HEK293 (cell line): ENCODE measurements at regions of chr1 and their contacts with region 1.

Region 1: DNA sequence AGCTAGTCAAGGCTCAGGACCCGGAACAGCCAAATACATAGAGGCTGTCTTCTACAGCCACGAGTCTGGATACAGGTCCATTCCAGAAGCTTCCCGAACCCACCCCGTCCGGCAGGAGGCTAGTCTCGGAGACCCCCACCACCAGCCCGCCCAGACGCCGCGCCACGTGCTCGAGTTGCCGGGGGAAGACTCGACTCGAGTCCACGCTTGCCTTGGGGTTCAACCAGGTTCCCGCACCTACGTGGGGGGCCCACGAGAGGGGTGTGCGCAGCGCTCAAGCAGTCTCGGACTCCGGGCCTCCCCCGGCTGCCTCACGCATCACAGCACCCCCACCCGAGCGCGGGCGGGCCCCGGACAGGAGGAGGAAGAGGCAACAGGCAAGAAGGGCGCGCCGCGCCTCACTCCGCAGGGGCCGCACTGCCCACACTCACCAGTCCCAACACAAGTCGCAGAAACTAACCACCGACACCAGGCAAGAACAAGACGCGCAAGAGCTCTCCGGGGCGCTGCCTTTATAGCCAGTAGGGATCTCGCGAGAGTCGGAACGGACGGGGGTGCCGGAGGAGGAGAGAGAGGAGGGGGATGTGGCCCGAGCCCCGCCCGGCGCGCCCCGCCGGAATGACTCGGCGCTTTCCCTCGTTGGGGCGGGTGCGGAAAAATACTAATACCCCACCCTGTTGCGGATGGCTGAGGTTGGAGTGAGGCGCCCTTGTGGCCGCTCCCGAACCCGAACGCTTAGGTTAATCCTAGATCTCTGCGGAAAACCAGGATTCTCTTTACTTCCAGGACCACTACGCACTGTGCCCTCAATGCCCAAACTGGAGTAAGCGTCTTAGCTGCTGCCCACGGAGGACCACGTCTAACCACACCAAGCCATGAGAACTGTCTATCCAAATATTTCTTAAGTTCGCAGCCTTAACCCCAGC is at the start of gene PRDX1:
- H3K4me3 ChIP-seq: peak within 1 kb of the TSS; percentile 96
- H3K27ac ChIP-seq: peak within 1 kb of the TSS; percentile 63
- H3K4me1 ChIP-seq: 0 out of 2 replicates have a peak, but pooled peaks cover 3% of the 10 kb centered on the region
- CTCF ChIP-seq: peak; percentile 75

Region 2: GRCh38 chr1:45490626-45491486 is 30.8 kb before region 1 on chr1 and contains the start of gene TESK2:
- CTCF ChIA-PET with region 1: interaction called, 6 read pairs
- POLR2A ChIA-PET with region 1: interaction called, 30 read pairs
- H3K4me3 ChIP-seq: peak within 1 kb of the TSS; percentile 92
- H3K27ac ChIP-seq: peak within 1 kb of the TSS; percentile 66; the same call in 1 of the 2 replicates
- H3K4me1 ChIP-seq: no peaks in the 10 kb centered on the region
- CTCF ChIP-seq: peak; percentile 25; the same call in 1 of the 2 replicates

Region 3: GRCh38 chr1:45535988-45536766 is 14.5 kb after region 1 on chr1:
- CTCF ChIA-PET with region 1: interaction called, 4 read pairs
- POLR2A ChIA-PET with region 1: interaction called, 59 read pairs
- H3K4me3 ChIP-seq: no peak overlapping the region
- H3K27ac ChIP-seq: no peak overlapping the region
- H3K4me1 ChIP-seq: peaks cover 3% of the 10 kb centered on the region; the same call in 1 of the 2 replicates
- CTCF ChIP-seq: no peak

Region 4: DNA sequence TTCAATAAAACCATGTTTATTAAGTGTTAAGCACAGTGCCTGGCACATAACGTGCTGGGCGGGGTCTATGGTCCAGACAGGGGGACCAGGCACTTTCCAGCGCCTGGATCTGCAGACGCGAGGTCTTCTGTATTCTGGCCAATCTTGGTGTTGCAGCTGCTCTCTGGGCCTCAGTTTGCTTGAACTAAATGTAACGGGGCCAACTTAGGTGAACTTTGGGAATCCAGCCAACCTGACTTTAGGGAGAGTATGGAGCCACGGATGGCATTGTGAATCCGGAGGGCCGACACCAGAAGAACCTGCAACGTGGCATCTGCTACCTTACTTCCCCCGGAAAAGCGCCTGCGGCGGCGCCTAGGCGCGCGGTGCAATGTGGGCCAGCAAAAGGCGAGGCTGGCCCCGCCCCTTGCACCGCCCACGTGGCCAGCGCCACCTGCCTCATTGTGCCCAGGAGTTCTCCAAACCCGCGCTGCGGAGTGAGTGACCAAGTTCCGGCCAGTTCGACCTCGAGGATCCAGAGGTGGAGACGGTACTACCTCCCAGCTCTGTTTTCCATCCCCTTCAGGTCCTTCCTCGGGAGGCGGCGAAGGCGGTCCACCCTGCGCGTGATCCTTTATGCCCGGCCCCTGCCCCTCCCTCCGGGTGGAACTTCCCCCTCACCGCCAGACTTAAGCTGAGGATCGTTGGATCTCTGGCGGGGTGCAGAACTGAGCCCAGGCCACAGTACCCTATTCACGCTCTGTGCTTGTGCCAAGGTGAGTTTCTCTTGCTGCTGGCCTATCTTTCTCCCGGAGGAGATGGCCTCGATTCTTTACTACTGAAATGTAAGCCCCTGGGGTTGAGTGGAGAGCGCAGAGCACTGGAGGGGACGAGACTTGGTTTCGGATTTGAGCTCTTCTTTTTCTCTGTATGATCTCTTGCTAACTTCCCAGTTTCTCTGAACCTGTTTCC is 29.0 kb after region 1 on chr1 and contains the start of gene AKR1A1:
- CTCF ChIA-PET with region 1: interaction called, 6 read pairs
- POLR2A ChIA-PET with region 1: interaction called, 66 read pairs
- H3K4me3 ChIP-seq: peak within 1 kb of the TSS; percentile 62
- H3K27ac ChIP-seq: peak within 1 kb of the TSS; percentile 62; the same call in 1 of the 2 replicates
- H3K4me1 ChIP-seq: peaks cover 3% of the 10 kb centered on the region; the same call in 1 of the 2 replicates
- CTCF ChIP-seq: peak; percentile 49; the same call in 1 of the 2 replicates

Region 5: DNA sequence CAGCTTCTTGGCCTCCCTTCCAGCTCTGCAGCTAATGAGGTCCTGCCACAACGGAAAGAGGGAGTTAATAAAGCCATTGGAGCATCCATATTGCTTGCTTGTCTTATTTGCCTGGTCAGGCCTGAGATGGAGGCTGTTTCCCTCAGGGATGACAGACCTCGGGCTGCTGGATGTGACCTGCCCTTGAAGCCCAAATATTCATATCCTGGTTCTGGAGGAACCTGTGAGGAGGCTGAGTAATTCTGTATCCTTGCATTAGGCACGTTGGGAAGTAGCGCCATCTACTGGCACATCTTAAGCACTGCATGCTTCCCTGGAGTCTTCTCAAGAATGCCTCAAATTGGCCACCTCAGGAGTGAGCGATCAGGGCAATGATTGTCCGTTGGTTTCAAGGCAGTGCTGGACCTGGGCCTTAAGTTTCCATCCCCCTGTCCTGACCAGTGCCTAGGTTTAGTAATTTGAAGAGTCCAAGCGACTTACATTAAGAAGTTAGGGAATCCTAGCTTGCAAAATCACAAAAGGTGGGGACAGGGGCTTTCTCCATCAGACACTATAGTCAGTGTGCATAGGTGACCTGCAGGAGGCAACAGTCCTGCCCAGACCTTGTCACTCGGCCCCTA is 48.4 kb after region 1 on chr1:
- CTCF ChIA-PET with region 1: interaction called, 30 read pairs
- POLR2A ChIA-PET with region 1: interaction called, 57 read pairs
- H3K4me3 ChIP-seq: no peak overlapping the region
- H3K27ac ChIP-seq: no peak overlapping the region
- H3K4me1 ChIP-seq: no peaks in the 10 kb centered on the region
- CTCF ChIP-seq: peak; percentile 87

Region 6: DNA sequence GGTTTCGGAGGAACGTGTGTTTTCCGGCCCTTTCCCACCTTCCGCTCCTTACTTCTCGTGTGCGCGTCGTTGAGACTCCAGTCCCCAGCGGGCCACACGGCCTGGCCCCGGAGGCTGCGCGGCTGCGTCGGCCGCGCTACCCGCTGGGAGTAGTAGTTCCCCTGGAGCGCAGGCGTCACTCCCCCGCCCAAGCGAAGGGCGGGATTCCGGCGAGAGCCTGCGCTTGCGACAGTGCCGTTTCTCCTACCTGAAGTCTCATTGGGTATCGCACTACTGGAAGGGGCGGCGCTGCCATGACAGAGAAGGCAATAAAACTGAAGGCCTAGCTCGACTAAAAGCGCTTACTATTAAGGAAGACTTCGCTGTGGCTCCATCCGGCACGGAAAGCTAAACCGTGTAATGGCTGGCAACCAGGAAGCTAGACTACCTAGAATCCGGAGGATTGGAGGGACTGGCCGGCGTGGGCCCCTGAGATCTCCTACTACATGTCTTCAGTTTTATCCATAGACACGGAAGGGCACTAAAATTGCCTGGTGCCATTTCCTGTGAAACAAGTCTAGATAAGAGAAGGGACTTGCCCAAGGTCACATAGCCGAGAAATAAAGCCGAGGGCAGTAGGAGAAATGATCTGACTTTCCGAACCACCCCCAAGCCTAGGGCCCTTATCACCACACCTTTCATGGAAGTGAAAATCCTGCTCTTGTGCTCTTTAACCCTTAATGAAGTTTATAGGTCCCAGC is 165.5 kb after region 1 on chr1:
- CTCF ChIA-PET with region 1: no interaction called
- POLR2A ChIA-PET with region 1: interaction called, 20 read pairs
- H3K4me3 ChIP-seq: peak overlapping the region; percentile 94
- H3K27ac ChIP-seq: peak overlapping the region; percentile 81
- H3K4me1 ChIP-seq: peaks cover 4% of the 10 kb centered on the region; the same call in 1 of the 2 replicates
- CTCF ChIP-seq: no peak